Ovary (tissue), 10 donors: ENCODE measurements at regions of chr18 and their contacts with region 1.

Region 1: GRCh38 chr18:42305869-42306593 is 351.0 kb downstream of the PIK3C3 start:
- DNase-seq: no peak
- H3K4me3 ChIP-seq: no peak overlapping the region
- H3K27ac ChIP-seq: no peak overlapping the region
- H3K4me1 ChIP-seq: no peaks in the 10 kb centered on the region
- H3K27me3 ChIP-seq: no peaks in the 10 kb centered on the region
- CTCF ChIP-seq: no peak
- EP300 ChIP-seq: no peak
- POLR2A ChIP-seq: no peak

Region 2: GRCh38 chr18:42028247-42028832 is 277.7 kb before region 1 on chr18:
- intact Hi-C with region 1: no loop called
- DNase-seq: no peak
- H3K4me3 ChIP-seq: no peak overlapping the region
- H3K27ac ChIP-seq: no peak overlapping the region
- H3K4me1 ChIP-seq: no peaks in the 10 kb centered on the region
- H3K27me3 ChIP-seq: no peaks in the 10 kb centered on the region
- CTCF ChIP-seq: peak in 1 of 3 donors; percentile 44
- EP300 ChIP-seq: no peak
- POLR2A ChIP-seq: no peak

Region 3: GRCh38 chr18:42242758-42243157 is 63.3 kb before region 1 on chr18:
- intact Hi-C with region 1: loop called in 1 of 4 experiments (anchors 10 kb)
- DNase-seq: no peak
- H3K4me3 ChIP-seq: no peak overlapping the region
- H3K27ac ChIP-seq: no peak overlapping the region
- H3K4me1 ChIP-seq: no peaks in the 10 kb centered on the region
- H3K27me3 ChIP-seq: no peaks in the 10 kb centered on the region
- CTCF ChIP-seq: no peak
- EP300 ChIP-seq: no peak
- POLR2A ChIP-seq: no peak

Region 4: DNA sequence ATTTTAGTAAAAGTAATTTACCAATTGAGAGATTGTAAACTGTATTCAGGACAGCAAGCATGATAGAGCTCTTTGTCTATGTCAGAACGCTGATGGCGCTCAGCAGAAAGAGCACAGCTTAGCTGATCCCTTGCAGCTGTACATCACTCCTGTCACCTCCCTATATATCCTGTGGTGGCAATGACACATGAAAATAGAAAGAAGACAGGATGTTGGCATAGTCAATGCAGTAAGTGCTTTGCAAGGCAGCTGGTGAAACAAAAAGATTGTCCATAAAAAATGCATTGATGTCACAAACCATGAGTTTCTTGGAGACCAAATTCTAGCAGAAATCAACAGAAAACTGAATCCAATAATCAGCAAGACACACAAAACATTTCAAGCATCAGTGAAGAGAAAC is 587.9 kb after region 1 on chr18:
- intact Hi-C with region 1: no loop called
- DNase-seq: no peak
- H3K4me3 ChIP-seq: no peak overlapping the region
- H3K27ac ChIP-seq: no peak overlapping the region
- H3K4me1 ChIP-seq: no peaks in the 10 kb centered on the region
- H3K27me3 ChIP-seq: no peaks in the 10 kb centered on the region
- CTCF ChIP-seq: no peak
- EP300 ChIP-seq: no peak
- POLR2A ChIP-seq: no peak

Region 5: DNA sequence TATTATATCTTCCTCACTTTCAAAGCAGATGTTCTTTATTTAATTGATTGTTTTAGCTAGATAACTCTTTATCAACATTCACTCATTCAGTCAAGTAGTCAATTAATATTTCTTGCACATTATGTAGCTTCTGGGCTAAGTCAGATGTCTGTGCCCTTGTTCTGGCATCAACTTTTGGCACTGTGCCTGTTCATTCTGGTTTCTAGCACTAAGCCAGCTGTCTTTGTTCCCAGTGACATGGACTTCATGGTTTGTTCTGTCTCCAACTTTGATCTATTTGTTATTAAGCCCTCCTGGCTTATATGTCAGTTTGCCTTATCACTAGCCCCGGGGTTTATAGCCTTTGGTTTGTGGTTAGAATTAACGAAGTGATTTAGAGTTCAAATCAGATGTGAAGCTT is 1219.1 kb after region 1 on chr18:
- intact Hi-C with region 1: no loop called
- DNase-seq: no peak
- H3K4me3 ChIP-seq: no peak overlapping the region
- H3K27ac ChIP-seq: no peak overlapping the region
- H3K4me1 ChIP-seq: no peaks in the 10 kb centered on the region
- H3K27me3 ChIP-seq: no peaks in the 10 kb centered on the region
- CTCF ChIP-seq: no peak
- EP300 ChIP-seq: no peak
- POLR2A ChIP-seq: no peak